ENCODE measurements at regions of chr3 and their contacts with region 1.

Region 1: GRCh38 chr3:151192545-151192944 is 10.5 kb downstream of the GPR171 start:
- DNase-seq: no peak
- H3K4me3 ChIP-seq: no peak overlapping the region
- H3K27ac ChIP-seq: no peak overlapping the region
- H3K4me1 ChIP-seq: no peaks in the 10 kb centered on the region
- H3K27me3 ChIP-seq: no peaks in the 10 kb centered on the region
- CTCF ChIP-seq: no peak

Region 2: GRCh38 chr3:151798466-151798865 is 605.9 kb after region 1 on chr3:
- CTCF ChIA-PET with region 1: no interaction called
- POLR2A ChIA-PET with region 1: interaction called, 28 read pairs
- intact Hi-C with region 1: no loop called
- DNase-seq: no peak
- H3K4me3 ChIP-seq: no peak overlapping the region
- H3K27ac ChIP-seq: no peak overlapping the region
- H3K4me1 ChIP-seq: peaks cover 8% of the 10 kb centered on the region; the same call in 1 of the 2 replicates
- H3K27me3 ChIP-seq: no peaks in the 10 kb centered on the region
- CTCF ChIP-seq: no peak